PC-9 (cell line): ENCODE measurements at regions of chr12 and their contacts with region 1.

Region 1: GRCh38 chr12:59041241-59042121 is 121.2 kb upstream of the LRIG3 start:
- DNase-seq: peak in 1 of 2 experiments; percentile 93
- H3K4me3 ChIP-seq: no peak overlapping the region; the same call in 1 of the 2 replicates
- H3K27ac ChIP-seq: peak overlapping the region; percentile 69
- H3K4me1 ChIP-seq: peaks cover 37% of the 10 kb centered on the region
- H3K27me3 ChIP-seq: no peaks in the 10 kb centered on the region
- CTCF ChIP-seq: no peak

Region 2: DNA sequence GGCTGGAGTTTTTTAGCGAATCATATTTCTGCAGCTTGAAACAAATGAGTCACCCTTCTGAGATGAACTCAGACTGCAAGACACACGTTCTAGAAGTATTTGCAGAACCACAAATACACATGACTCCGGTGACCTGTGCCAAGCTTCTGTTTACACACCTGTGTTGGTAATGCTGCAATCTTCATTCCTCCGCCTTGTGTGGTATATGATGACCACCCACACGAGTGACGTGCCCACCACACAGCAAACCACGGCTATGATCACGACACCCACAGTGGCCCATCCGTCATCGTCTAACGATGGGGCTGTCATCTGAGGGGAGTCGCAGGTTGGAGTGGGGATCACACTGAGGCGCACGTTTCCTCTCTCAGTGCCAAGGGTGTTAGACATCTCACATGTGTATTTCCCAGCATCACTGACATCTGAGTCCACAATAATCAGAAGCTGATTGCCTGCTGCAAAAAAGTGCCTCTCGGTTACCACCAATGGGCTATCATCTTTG is 164.2 kb before region 1 on chr12:
- CTCF ChIA-PET with region 1: no interaction called
- POLR2A ChIA-PET with region 1: no interaction called
- intact Hi-C with region 1: loop called (anchors 2 kb)
- DNase-seq: peak; percentile 63 to 92
- H3K4me3 ChIP-seq: no peak overlapping the region
- H3K27ac ChIP-seq: 0 out of 2 replicates have a peak overlapping the region, but pooled peaks have one; percentile 8
- H3K4me1 ChIP-seq: peaks cover 17% of the 10 kb centered on the region
- H3K27me3 ChIP-seq: no peaks in the 10 kb centered on the region
- CTCF ChIP-seq: no peak

Region 3: DNA sequence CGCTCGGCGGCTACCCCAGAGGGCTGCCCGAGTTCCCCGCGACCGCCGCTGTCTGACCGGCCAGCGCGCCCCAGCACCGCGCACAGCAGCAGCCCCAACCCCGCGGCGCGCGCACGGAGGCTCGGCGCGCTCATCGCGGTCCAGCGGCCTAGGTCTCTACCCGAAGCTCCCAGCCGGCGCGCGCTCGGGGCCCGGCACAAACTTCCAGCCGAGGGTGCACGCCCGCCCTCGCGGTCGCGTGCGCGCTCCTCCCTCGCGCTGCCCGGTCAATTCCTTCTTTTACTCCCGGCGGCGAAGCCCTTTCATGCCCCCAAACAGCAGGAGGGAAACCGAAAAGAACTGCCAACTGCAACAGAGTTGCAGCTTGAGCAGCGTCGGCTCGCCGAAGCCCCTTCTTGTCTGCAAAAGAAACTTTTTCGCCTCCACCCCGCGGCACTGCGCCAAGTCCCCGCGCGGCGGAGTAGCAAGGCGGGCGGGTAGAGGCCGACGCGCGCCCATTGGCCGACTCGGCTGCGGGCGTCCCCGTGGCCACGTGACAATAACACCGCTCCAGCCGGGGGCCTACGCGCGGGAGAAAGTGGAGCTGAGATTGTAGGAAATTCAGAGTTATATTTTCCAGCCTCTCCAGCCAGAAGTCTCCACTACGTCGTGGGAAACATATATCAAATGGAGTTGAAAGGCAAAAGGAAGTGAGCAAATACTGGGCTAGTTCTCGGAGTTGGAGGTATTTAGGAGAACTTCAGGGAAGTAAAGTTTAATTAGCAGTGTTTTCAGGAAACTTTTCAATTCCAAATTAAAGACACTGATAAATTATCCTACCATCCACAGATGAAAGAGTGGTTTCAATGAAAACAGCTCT is 121.2 kb before region 1 on chr12 and contains the start of gene LRIG3:
- CTCF ChIA-PET with region 1: interaction called, 7 read pairs
- POLR2A ChIA-PET with region 1: interaction called, 8 read pairs
- intact Hi-C with region 1: loop called (anchors 5 kb)
- DNase-seq: peak; percentile 72 to 81
- H3K4me3 ChIP-seq: peak within 1 kb of the TSS; percentile 77
- H3K27ac ChIP-seq: peak within 1 kb of the TSS; percentile 5
- H3K4me1 ChIP-seq: peaks cover 44% of the 10 kb centered on the region
- H3K27me3 ChIP-seq: no peaks in the 10 kb centered on the region
- CTCF ChIP-seq: no peak; the same call in 1 of the 2 replicates
- total RNA-seq, gene LRIG3: 8.8 and 10.6 TPM in 2 replicates

Region 4: DNA sequence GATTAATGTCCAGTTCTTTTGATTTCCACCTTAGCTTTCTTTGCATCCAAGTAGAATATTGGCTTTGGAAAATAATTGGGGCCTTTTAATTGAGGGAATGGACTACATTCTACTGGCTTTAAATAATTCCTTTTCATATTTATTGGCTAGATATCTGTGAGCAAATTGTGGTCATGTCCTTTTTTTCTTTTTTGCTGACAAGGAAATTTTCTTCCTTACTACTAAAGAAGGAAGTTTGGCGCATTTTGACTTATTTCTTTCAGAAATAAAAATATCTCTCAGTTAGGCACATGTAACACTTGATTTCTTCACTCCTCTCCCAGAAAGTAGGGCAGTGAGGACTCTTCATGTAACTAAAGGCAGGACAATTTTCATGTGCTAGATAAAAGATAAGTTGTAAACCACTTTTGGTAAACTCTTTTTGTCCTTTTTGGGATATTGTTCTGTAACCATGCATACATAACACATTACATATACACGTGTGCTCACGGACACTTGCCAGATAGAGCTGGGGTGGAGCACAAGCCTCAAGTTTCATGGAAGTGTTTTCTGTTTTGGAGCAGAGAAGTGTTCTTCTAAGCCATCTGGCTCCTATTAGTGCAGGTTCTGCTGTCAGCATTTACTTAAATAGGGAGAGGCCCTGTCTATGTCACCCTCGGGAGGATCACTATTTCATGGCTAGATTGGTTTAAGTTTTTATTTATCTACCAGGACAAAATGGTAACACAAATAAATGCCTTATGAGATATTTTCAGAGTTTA is 36.1 kb before region 1 on chr12:
- CTCF ChIA-PET with region 1: no interaction called
- POLR2A ChIA-PET with region 1: no interaction called
- intact Hi-C with region 1: no loop called
- DNase-seq: no peak
- H3K4me3 ChIP-seq: no peak overlapping the region
- H3K27ac ChIP-seq: no peak overlapping the region
- H3K4me1 ChIP-seq: no peaks in the 10 kb centered on the region
- H3K27me3 ChIP-seq: no peaks in the 10 kb centered on the region
- CTCF ChIP-seq: no peak